K562 (cell line): ENCODE measurements at regions of chr11 and their contacts with region 1.

Region 1: DNA sequence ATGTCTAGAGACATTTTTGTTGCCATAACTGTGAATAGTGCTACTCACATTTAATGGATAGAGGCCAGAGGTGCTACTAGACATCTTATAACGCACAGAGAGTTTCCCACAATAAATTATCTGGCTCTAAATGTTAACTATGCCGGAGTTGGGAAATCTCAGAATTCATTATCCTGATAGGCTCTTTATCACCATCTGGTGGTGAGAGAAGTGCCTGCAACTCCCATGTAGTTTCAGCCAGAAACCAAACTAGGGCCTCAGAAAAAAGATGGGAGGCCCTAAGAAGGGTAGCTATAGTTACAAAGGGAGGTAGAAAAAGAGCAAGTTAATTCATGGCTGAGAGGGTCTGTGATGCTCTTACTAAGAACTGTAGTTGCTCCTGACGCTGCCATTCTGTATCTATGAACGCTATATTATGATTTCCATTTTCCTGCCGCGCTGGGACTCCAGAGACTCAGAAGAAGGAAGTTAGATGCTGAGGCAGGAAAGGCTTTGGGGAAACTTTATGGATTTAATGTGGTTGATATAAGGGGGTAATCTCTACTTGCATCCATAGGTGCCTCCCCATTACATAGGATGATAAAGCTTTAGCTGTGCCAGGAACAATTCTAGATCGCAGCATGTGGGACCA is 22.9 kb upstream of the MRPL17 start:
- DNase-seq: peak; percentile 54 to 64 (median 58)
- ATAC-seq: peak; percentile 78
- H3K4me3 ChIP-seq: no peak overlapping the region
- H3K27ac ChIP-seq: no peak overlapping the region
- H3K4me1 ChIP-seq: no peaks in the 10 kb centered on the region
- H3K27me3 ChIP-seq: no peaks in the 10 kb centered on the region
- CTCF ChIP-seq: peak; percentile 81 to 89 (median 81)
- EP300 ChIP-seq: no peak
- POLR2A ChIP-seq: no peak
- RAD21 ChIP-seq: peak; percentile 81 to 89

Region 2: GRCh38 chr11:6377902-6378639 is 327.9 kb before region 1 on chr11:
- CTCF ChIA-PET with region 1: interaction called, 13 read pairs
- POLR2A ChIA-PET with region 1: no interaction called
- in situ Hi-C with region 1: loop called (anchors 10 kb)
- intact Hi-C with region 1: loop called (anchors 1 kb)
- DNase-seq: no peak
- ATAC-seq: peak; percentile 62
- H3K4me3 ChIP-seq: no peak overlapping the region
- H3K27ac ChIP-seq: no peak overlapping the region
- H3K4me1 ChIP-seq: peaks cover 0 to 6% of the 10 kb centered on the region in 2 experiments; a peak in 2 of 5 replicates
- H3K27me3 ChIP-seq: peaks cover 15 to 23% of the 10 kb centered on the region in 2 experiments; a peak in 3 of 5 replicates
- CTCF ChIP-seq: no peak
- EP300 ChIP-seq: no peak
- POLR2A ChIP-seq: no peak
- RAD21 ChIP-seq: no peak

Region 3: GRCh38 chr11:6389921-6390724 is 315.9 kb before region 1 on chr11 and contains the start of gene SMPD1:
- CTCF ChIA-PET with region 1: no interaction called
- POLR2A ChIA-PET with region 1: interaction called, 3 read pairs
- in situ Hi-C with region 1: loop called (anchors 10 kb)
- intact Hi-C with region 1: no loop called
- DNase-seq: peak; percentile 95 to 98 (median 96)
- ATAC-seq: peak; percentile 96
- H3K4me3 ChIP-seq: peak within 1 kb of the TSS; percentile 73
- H3K27ac ChIP-seq: peak within 1 kb of the TSS; percentile 80
- H3K4me1 ChIP-seq: peaks cover 22 to 26% of the 10 kb centered on the region in 2 experiments
- H3K27me3 ChIP-seq: no peaks in the 10 kb centered on the region
- CTCF ChIP-seq: no peak
- EP300 ChIP-seq: peak; percentile 38; the same call in 1 of the 2 replicates
- POLR2A ChIP-seq: peak; percentile 77
- RAD21 ChIP-seq: no peak
- polyA plus RNA-seq, gene SMPD1: 0.90 to 1.8 TPM